CD8-positive, alpha-beta T cell (primary cell): ENCODE measurements at regions of chr2 and their contacts with region 1.

Region 1: DNA sequence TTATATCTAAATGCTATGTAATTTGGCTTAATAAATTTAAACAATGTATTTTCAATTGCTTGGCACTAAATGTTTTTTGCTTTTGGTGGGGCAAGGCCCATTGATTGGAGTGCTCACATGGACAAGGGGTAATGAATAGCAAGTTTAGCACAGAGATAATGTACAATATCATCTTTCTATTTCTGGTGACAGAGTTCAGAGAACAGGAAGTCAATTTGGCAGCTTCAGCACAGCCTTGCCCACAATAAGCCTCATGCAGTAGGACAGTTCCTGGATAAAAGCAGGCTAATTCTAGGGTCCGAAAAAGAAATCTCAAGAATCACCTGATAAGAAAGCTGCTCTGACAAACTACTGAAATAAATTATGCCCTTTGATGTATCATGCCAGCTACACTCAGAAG is 443.9 kb upstream of the FSHR start:
- DNase-seq: no peak
- ATAC-seq: no peak
- H3K4me3 ChIP-seq: no peak overlapping the region
- H3K4me3 Mint-ChIP-seq: no peak overlapping the region
- H3K27ac ChIP-seq: no peak overlapping the region
- H3K27ac Mint-ChIP-seq: no peak overlapping the region
- H3K4me1 ChIP-seq: no peaks in the 10 kb centered on the region
- H3K4me1 Mint-ChIP-seq: no peaks in the 10 kb centered on the region
- H3K27me3 ChIP-seq: no peaks in the 10 kb centered on the region
- H3K27me3 Mint-ChIP-seq: no peaks in the 10 kb centered on the region
- CTCF ChIP-seq: no peak

Region 2: DNA sequence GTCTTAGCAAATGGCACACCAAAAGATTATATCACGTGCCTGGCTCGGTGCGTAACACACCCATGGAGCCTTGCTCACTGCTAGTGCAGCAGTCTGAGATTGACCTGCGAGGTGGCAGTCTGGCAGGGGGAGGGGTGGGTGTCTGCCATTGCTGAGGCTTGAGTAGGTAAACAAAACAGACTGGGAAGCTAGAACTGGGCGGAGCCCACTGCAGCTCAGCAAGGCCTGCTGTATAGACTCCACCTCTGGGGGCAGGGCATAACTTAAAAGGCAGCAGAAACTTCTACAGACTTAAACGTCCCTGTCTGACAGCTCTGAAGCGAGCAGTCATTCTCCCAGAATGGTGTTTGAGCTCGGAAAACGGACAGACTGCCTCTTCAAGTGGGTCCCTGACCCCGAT is 388.0 kb before region 1 on chr2:
- CTCF ChIA-PET with region 1: no interaction called
- POLR2A ChIA-PET with region 1: no interaction called
- intact Hi-C with region 1: no loop called
- DNase-seq: no peak
- ATAC-seq: no peak
- H3K4me3 ChIP-seq: no peak overlapping the region
- H3K4me3 Mint-ChIP-seq: no peak overlapping the region
- H3K27ac ChIP-seq: no peak overlapping the region
- H3K27ac Mint-ChIP-seq: no peak overlapping the region
- H3K4me1 ChIP-seq: no peaks in the 10 kb centered on the region
- H3K4me1 Mint-ChIP-seq: no peaks in the 10 kb centered on the region
- H3K27me3 ChIP-seq: no peaks in the 10 kb centered on the region
- H3K27me3 Mint-ChIP-seq: no peaks in the 10 kb centered on the region
- CTCF ChIP-seq: no peak

Region 3: DNA sequence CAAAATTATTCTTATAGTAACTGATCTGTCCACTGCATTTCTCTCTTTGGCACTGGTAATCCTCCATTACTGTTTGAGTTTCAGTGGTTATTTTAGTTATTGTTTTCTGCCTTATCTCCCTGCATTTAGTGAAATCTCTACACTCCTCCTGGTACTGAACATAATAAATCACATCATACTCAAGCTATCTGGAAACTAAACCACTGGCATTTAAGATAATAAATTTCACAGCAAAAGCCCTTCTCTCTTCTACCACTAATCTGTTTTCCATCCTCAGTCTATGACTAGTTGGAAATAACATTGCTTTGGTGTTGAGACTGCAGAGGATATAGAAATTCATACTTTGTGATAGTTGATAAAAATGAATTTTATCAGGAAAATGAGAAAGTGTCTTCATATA is 44.6 kb before region 1 on chr2:
- CTCF ChIA-PET with region 1: no interaction called
- POLR2A ChIA-PET with region 1: no interaction called
- intact Hi-C with region 1: loop called in 1 of 2 experiments (anchors 2 kb)
- DNase-seq: no peak
- ATAC-seq: no peak
- H3K4me3 ChIP-seq: no peak overlapping the region
- H3K4me3 Mint-ChIP-seq: no peak overlapping the region
- H3K27ac ChIP-seq: no peak overlapping the region
- H3K27ac Mint-ChIP-seq: no peak overlapping the region
- H3K4me1 ChIP-seq: no peaks in the 10 kb centered on the region
- H3K4me1 Mint-ChIP-seq: no peaks in the 10 kb centered on the region
- H3K27me3 ChIP-seq: no peaks in the 10 kb centered on the region
- H3K27me3 Mint-ChIP-seq: no peaks in the 10 kb centered on the region
- CTCF ChIP-seq: no peak

Region 4: DNA sequence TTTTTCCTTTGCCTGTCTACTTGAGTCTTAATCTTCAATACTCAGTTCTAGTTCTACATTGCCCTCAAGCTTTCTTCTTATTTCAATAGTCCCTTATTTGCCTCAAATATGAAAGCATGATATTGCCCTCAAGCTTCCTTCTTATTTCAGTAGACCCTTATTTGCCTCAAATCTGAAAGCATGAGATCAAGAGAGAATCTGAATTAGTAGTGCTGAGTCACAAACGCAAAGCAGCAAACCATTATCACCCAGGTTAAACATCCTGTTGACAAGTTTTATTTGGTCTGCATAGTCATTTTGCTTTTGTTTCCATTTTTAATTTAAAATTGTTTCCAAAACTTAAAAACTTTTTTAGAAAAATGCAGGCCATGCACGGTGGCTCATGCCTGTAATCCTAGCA is 139.4 kb after region 1 on chr2:
- CTCF ChIA-PET with region 1: no interaction called
- POLR2A ChIA-PET with region 1: no interaction called
- intact Hi-C with region 1: no loop called
- DNase-seq: no peak
- ATAC-seq: no peak
- H3K4me3 ChIP-seq: no peak overlapping the region
- H3K4me3 Mint-ChIP-seq: no peak overlapping the region
- H3K27ac ChIP-seq: no peak overlapping the region
- H3K27ac Mint-ChIP-seq: no peak overlapping the region
- H3K4me1 ChIP-seq: no peaks in the 10 kb centered on the region
- H3K4me1 Mint-ChIP-seq: no peaks in the 10 kb centered on the region
- H3K27me3 ChIP-seq: no peaks in the 10 kb centered on the region
- H3K27me3 Mint-ChIP-seq: no peaks in the 10 kb centered on the region
- CTCF ChIP-seq: no peak